Posterior cingulate gyrus (tissue), 11 donors: ENCODE measurements at regions of chr13 and their contacts with region 1.

Region 1: DNA sequence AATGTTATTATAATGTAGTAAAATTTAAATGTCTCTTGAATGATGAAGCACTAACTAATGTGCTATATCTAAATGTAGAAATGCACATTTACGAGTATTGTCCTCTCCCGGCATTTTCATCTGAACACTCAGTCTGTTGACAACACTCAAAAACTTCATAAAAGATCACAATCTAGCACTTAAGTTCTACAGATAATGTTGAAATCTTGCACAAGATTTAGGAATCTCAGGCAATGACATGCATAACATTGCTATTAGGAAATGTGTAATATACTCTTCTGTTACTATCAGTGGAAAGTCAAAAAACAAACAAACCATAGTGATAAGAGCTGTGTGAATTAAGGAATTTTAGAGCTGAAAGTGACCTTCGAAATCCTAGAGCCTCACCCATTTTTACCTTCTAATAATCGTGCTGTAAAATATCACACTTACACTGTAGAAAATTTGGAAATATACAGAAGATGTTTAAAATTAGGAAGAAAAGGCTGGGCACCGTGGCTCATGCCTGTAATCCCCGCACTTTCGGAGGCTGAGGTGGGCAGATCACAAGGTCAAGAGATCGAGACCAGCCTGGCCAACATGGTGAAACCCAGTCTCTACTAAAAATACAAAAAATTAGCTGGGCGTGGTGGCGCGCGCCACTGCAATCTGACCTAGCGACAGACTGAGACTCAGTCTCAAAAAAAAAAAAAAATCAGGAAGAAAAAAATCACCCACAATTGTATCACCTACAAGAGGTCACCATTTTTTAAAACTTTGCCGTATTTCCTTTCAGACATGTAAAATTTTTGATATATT is 37.7 kb upstream of the XPO4 start:
- DNase-seq: peak in 1 of 10 donors; percentile 5

Region 2: GRCh38 chr13:19726611-19727010 is 1213.7 kb before region 1 on chr13:
- intact Hi-C with region 1: no loop called
- DNase-seq: no peak

Region 3: DNA sequence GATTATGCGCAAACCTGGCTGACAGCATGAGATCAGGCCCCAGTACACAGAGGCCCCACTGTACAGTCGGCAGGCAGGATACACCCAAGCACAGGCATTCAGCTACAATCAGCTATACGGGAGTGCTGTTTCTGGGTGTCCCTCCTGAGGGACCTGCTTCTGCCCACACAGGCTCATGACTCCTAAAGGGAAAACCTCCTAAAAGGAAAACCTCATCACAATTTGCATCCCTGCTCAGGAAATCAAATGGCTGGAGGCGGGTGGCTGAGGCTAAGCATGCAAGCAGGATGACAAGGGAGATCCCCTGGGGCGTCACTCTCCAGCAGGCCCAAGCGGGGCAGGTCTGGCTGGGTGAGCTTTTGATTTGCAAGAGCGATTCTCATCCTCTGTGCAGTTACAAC is 514.5 kb before region 1 on chr13:
- intact Hi-C with region 1: no loop called
- DNase-seq: no peak

Region 4: DNA sequence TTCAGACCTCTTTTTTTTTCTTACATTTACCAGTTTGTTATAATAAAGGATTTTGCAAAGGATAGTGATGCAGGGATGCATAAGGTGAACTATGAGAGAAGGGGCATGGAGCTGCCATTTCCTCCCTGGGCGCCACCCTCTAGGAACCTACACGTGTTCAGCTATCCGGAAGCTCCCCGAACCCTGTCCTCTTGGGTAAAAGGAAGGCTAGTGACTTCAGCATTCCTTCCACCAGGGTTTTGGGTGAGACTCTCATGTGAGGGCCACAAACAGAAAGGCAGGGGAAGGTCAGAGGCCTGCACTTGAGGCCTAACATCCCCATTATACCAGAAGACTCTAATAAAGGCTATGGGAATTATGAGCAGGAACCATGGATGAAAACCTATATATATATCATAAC is 316.1 kb before region 1 on chr13:
- intact Hi-C with region 1: no loop called
- DNase-seq: no peak

Region 5: GRCh38 chr13:21060987-21061763 is 120.9 kb after region 1 on chr13 and contains the start of gene LATS2:
- intact Hi-C with region 1: loop called (anchors 5 kb)
- DNase-seq: peak; percentile 74 to 98 (median 86)

Region 6: DNA sequence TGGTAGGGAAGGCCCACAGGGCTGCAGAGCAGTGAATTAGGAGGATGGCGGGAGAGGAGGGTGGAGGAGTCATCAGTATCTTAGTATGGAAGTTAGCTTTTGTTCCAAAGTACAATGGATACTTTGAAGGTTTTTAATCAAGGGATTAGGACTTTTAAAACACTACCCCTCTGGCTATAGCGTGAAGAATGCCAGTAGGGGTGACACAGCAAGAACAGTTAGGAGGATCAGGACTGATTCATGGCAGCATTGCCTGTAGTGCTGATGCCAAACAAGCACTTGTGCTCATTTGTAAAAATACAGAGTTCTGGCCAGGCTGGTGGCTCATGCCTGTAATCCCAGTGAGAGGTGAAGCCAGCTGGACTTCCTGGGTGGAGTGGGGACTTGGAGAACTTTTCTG is 189.8 kb after region 1 on chr13:
- intact Hi-C with region 1: loop called (anchors 5 kb)
- DNase-seq: no peak

Region 7: GRCh38 chr13:21675095-21675991 is 735.1 kb after region 1 on chr13:
- intact Hi-C with region 1: no loop called
- DNase-seq: peak in 7 of 10 donors; percentile 38 to 93 (median 56)